ENCODE measurements at regions of chr9 and their contacts with region 1.

Region 1: DNA sequence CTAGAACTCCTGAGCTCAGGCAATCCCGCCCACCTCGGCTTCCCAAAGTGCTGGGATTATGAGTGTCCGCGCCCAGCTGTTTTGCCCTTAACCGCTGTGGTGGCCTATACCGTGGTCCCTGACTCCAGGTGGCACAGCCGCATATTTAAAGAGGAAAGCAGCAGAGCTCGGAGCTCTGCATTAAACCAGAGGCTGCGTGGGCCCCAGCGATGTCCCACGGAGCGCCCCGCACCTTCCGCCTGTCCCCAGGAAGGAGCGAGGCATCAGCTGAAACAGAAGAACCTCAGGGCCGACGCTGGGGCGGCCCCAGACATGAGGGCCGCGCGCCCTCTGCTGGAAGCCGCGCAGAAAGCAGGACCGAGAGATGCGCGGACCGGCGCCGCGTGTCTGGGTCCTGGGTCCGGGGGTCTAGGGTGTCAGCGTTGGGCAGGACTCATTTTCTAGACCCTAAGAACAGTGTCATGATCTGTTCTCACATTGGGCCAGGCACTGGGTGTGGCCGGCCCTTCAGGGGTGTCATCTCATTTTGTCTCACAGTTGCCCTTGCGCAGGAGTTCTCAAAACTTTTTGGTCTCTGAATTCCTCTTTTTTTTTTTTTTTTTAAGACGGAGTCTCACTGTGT is 37.7 kb downstream of the LAMC3 start:
- DNase-seq: peak; percentile 77
- ATAC-seq: peak; percentile 96
- H3K4me3 Mint-ChIP-seq: no peak overlapping the region
- H3K27ac Mint-ChIP-seq: no peak overlapping the region
- H3K4me1 Mint-ChIP-seq: peaks cover 4% of the 10 kb centered on the region
- H3K27me3 Mint-ChIP-seq: no peaks in the 10 kb centered on the region

Region 2: DNA sequence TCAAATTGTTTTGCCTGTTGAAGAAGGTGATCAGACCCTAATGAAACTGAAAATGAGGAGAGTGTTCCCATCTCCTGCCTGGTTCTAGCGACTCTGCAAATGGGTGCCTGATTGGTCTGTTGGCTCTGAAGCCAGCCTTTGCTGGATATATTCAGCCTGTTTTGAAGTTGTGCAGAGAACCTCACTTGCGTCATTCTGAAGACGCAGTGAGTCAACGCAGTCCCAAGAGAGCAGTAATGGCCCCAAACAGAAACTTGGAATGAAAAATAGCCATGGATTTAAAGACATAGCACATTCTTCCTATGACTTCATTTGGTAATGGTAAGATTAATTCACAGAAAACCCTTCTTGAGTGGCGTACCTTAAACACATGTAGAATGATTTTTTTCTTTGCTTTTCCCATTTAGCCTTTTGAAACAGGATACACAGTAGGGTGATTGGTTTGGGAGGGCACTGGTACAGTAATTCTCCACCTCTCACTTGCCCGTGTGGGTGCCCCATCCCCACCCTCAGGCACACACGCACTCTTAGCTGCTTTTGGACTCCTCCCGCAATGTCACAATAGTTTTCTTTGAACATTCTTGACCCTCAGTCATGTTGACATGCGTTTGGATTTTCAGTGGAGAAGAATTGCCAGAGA is 265.7 kb before region 1 on chr9:
- CTCF ChIA-PET with region 1: no interaction called
- POLR2A ChIA-PET with region 1: no interaction called
- DNase-seq: no peak
- ATAC-seq: no peak
- H3K4me3 Mint-ChIP-seq: no peak overlapping the region
- H3K27ac Mint-ChIP-seq: no peak overlapping the region
- H3K4me1 Mint-ChIP-seq: no peaks in the 10 kb centered on the region
- H3K27me3 Mint-ChIP-seq: no peaks in the 10 kb centered on the region

Region 3: GRCh38 chr9:130997925-130998596 is 48.6 kb before region 1 on chr9:
- CTCF ChIA-PET with region 1: interaction called, 14 read pairs
- POLR2A ChIA-PET with region 1: no interaction called
- DNase-seq: peak; percentile 66
- ATAC-seq: peak; percentile 68
- H3K4me3 Mint-ChIP-seq: no peak overlapping the region
- H3K27ac Mint-ChIP-seq: no peak overlapping the region
- H3K4me1 Mint-ChIP-seq: no peaks in the 10 kb centered on the region
- H3K27me3 Mint-ChIP-seq: peaks cover 3% of the 10 kb centered on the region

Region 4: DNA sequence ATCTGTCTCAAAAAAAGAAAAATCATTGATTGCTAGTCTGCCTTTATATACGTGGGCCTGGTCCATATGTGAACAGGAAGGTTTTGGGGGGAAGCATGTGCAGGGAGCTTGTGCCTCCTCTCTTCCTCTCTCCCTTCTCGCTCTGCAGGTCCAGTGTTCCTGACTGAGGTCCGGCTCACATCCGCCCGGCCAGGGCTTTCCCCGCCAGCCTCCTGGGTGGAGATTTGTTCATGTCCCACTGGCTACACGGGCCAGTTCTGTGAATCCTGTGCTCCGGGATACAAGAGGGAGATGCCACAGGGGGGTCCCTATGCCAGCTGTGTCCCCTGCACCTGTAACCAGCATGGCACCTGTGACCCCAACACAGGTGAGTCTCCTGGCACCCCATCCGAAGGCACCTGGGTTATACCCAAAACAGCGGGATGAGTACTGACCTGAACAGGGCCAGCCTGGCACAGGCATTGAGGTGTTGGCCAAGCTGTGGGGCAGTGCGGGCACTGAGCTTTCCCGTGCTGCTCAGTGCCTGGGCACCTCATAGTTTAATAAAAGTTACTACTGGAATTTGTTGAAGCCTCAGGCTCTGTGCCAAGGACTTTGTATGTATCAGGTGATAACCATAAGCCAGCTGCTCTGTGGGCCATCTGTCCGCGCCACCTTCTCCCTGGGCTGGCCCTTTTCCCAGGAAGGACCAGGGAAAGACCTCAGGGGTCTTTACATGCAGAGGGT is 10.3 kb after region 1 on chr9:
- CTCF ChIA-PET with region 1: interaction called, 10 read pairs
- POLR2A ChIA-PET with region 1: no interaction called
- DNase-seq: no peak
- ATAC-seq: no peak
- H3K4me3 Mint-ChIP-seq: no peak overlapping the region
- H3K27ac Mint-ChIP-seq: no peak overlapping the region
- H3K4me1 Mint-ChIP-seq: no peaks in the 10 kb centered on the region
- H3K27me3 Mint-ChIP-seq: no peaks in the 10 kb centered on the region

Region 5: GRCh38 chr9:131160416-131161112 is 113.9 kb after region 1 on chr9:
- CTCF ChIA-PET with region 1: no interaction called
- POLR2A ChIA-PET with region 1: no interaction called
- DNase-seq: no peak
- ATAC-seq: no peak
- H3K4me3 Mint-ChIP-seq: no peak overlapping the region
- H3K27ac Mint-ChIP-seq: no peak overlapping the region
- H3K4me1 Mint-ChIP-seq: no peaks in the 10 kb centered on the region
- H3K27me3 Mint-ChIP-seq: no peaks in the 10 kb centered on the region

Region 6: DNA sequence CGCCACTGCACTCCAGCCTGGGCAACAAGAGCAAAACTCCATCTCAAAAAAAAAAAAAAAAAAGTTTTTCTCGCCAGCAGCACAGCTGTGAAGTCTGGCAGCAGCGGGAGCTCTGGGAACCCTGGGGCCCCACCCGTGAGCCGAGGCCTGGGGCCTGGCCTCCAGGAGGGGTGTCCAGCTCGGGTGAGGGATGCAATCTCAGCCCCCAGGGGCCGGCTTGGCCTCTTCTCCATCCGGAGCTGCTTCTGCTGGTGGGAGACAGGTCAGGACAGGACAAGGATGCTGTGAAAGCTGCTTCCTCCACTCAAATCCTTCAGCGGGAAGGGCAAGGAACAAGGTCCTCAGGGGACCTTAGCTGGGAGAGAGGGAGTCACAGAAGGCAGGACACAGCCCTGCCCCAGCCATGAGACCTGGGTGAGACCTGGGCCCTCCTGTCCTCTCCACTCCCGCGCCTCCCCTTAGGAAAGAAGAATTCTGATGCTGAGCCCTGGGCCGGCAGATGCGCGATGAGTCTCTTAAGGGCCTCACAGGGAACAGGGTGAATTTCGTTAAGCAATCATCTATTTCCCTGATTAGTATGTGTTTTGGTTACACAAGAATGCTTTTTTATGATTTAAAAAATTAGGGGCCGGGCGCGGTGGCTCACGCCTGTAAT is 273.5 kb after region 1 on chr9:
- CTCF ChIA-PET with region 1: no interaction called
- POLR2A ChIA-PET with region 1: no interaction called
- DNase-seq: no peak
- ATAC-seq: no peak
- H3K4me3 Mint-ChIP-seq: no peak overlapping the region
- H3K27ac Mint-ChIP-seq: no peak overlapping the region
- H3K4me1 Mint-ChIP-seq: no peaks in the 10 kb centered on the region
- H3K27me3 Mint-ChIP-seq: no peaks in the 10 kb centered on the region

Measured in activated CD8-positive, alpha-beta T cell treated with anti-CD3 and anti-CD28 coated beads, Interleukin-2, amount 10 ng/mL, durations not matched to agents 7 days and 5 days (primary cell).